Aorta (tissue), 5 donors: ENCODE measurements at regions of chrX and their contacts with region 1.

Region 1: GRCh38 chrX:70433848-70434351 is 10.7 kb upstream of the DLG3 start:
- DNase-seq: peak; percentile 77 to 89
- ATAC-seq: peak; percentile 83
- H3K4me3 ChIP-seq: peak overlapping the region; percentile 55 to 67
- H3K27ac ChIP-seq: peak overlapping the region; percentile 17 to 95
- H3K4me1 ChIP-seq: no peaks in the 10 kb centered on the region
- H3K27me3 ChIP-seq: no peaks in the 10 kb centered on the region

Region 2: DNA sequence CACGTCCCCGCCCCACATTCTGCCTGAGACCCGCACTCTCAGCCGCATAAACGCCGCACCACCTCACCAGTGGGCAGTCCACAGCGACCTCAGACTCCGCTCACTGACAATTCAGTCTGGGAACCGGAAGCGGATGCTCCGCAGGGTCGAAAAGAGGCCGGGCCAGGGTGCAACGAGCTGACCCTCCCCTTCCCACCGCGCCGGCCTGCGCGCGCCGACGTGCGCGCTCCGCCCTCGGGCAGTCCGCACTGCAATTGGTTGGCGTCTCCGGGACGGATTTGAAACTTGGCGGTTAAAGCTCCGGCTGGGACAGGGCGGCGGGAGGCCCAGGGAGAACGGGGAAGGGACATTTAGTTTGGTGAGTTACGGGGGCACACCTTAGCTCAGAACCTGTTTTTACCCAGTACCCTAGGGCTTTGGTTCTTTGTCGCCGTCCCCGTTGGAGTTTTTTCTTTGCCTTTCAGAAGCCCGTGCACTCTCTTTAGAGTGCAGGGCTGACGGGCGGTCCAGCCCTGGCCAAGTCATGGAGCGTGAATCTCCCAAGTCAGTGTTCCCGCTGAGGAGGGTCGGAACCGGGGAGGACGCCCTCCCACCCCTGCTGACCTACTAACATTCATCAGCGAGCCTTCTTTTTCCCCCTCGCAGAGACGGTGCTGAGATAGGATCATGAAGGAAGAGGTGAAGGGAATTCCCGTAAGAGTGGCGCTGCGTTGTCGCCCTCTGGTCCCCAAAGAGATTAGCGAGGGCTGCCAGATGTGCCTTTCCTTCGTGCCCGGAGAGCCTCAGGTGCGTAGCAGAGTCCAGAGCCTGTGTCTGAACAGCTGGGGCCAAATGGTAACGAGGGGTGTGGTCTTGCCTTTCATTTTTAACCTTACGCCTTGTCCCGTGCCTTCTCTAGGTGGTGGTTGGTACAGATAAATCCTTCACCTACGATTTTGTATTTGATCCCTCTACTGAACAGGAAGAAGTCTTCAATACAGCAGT is 143.8 kb before region 1 on chrX and contains the starts of genes KIF4A and PDZD11:
- intact Hi-C with region 1: loop called in 1 of 2 experiments (anchors 5 kb)
- DNase-seq: peak; percentile 89 to 92
- ATAC-seq: peak; percentile 97
- H3K4me3 ChIP-seq: peak within 1 kb of the TSS; percentile 20 to 43
- H3K27ac ChIP-seq: peak within 1 kb of the TSS in 1 of 2 donors; percentile 75
- H3K4me1 ChIP-seq: no peaks in the 10 kb centered on the region
- H3K27me3 ChIP-seq: no peaks in the 10 kb centered on the region
- total RNA-seq, gene KIF4A: 0.36 to 0.66 TPM
- total RNA-seq, gene PDZD11: 18.7 to 27.1 TPM

Region 3: GRCh38 chrX:70476934-70477733 is 43.2 kb after region 1 on chrX:
- intact Hi-C with region 1: no loop called
- DNase-seq: peak in 1 of 2 donors; percentile 51
- ATAC-seq: peak; percentile 60
- H3K4me3 ChIP-seq: no peak overlapping the region
- H3K27ac ChIP-seq: peak overlapping the region in 1 of 2 donors; percentile 20
- H3K4me1 ChIP-seq: peaks cover 0 to 6% of the 10 kb centered on the region in 2 donors
- H3K27me3 ChIP-seq: no peaks in the 10 kb centered on the region

Region 4: GRCh38 chrX:70921709-70922352 is 487.9 kb after region 1 on chrX:
- intact Hi-C with region 1: no loop called
- DNase-seq: no peak
- ATAC-seq: no peak
- H3K4me3 ChIP-seq: no peak overlapping the region
- H3K27ac ChIP-seq: no peak overlapping the region
- H3K4me1 ChIP-seq: no peaks in the 10 kb centered on the region
- H3K27me3 ChIP-seq: no peaks in the 10 kb centered on the region